Breast epithelium (tissue), 4 donors: ENCODE measurements at regions of chr3 and their contacts with region 1.

Region 1: GRCh38 chr3:152550284-152550683 is 281.6 kb downstream of the MBNL1 start:
- DNase-seq: no peak
- H3K4me3 ChIP-seq: no peak overlapping the region
- H3K27ac ChIP-seq: no peak overlapping the region
- H3K4me1 ChIP-seq: no peaks in the 10 kb centered on the region
- H3K27me3 ChIP-seq: no peaks in the 10 kb centered on the region
- CTCF ChIP-seq: no peak
- POLR2A ChIP-seq: no peak

Region 2: DNA sequence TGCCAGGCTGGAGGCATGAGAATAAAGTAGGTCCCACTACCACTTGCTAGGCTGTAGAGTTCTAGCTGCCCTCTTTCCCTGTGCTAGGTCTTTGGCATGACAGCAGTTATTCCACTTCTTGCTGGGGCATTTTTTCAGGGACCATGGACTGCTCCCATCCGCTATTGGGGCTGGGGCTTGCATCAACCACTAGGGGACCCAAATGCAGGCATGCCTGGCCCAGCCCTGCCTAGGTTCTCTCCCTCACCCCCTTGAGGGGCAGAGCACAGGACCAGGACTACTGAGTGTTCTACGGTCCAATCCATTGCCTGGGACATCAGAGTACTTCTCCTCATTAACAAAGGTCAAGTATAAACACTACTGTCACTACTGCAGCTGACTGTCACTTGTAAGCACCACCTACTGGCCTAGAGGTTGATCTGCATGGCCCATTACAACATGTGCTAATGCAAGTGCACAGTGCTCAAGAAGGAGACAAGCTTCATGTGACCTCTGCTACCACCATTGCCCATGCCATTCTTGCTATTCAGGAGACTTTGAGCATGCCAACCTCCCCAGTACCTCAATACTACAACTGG is 11.0 kb before region 1 on chr3:
- intact Hi-C with region 1: loop called (anchors 1 kb)
- DNase-seq: no peak
- H3K4me3 ChIP-seq: no peak overlapping the region
- H3K27ac ChIP-seq: no peak overlapping the region
- H3K4me1 ChIP-seq: no peaks in the 10 kb centered on the region
- H3K27me3 ChIP-seq: no peaks in the 10 kb centered on the region
- CTCF ChIP-seq: no peak
- POLR2A ChIP-seq: no peak